ENCODE measurements at regions of chr7 and their contacts with region 1.

Region 1: DNA sequence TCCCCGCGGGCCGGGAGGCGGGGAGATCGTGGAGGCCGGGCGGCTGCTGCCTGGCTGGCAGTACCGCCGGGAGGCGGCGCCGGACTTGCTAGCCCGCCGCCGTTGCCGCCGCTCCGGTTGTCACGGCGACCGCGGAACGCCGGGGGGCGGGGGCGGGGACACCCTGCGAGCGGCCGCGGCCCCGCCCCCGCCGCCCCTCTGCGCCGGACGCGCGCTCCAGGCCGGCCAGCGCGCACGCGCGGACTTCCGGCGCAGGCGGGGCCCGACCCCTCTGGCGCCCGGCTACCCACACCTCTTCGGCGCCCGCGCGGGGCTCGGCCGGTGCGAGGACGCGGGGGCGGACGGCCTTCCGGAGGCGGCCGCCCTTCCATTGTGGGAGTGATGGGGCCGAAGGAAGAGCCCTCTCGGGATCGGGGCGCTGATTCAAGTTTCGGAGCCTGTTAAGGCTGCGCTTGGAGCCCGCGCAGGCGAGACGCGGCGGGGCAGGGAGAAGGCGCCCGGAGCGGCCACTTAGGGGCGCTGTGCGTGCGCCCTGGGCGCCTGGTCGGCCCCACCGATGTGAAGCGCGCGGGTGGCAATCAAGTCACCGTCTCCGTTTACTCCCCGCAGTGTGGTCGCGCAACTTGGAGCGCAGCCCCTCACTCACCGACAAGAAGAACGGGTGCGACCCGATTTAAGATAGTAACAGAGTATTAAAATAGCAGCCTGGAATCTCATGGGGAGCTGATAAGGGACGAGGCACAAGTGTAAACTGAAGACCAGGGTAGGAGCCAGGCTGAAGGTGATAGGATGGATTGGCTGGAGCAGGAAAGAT is 448 bp upstream of the DPY19L1 start:
- DNase-seq: peak; percentile 91 to 96
- ATAC-seq: peak; percentile 85 to 94 (median 90)
- H3K4me3 ChIP-seq: peak overlapping the region; percentile 23 to 86 (median 68)
- H3K27ac ChIP-seq: peak overlapping the region; percentile 70 to 93 (median 89)
- H3K4me1 ChIP-seq: peaks cover 0 to 34% (median 24%) of the 10 kb centered on the region in 9 donors
- H3K27me3 ChIP-seq: no peaks in the 10 kb centered on the region
- CTCF ChIP-seq: peak; percentile 73 to 97 (median 83)

Region 2: DNA sequence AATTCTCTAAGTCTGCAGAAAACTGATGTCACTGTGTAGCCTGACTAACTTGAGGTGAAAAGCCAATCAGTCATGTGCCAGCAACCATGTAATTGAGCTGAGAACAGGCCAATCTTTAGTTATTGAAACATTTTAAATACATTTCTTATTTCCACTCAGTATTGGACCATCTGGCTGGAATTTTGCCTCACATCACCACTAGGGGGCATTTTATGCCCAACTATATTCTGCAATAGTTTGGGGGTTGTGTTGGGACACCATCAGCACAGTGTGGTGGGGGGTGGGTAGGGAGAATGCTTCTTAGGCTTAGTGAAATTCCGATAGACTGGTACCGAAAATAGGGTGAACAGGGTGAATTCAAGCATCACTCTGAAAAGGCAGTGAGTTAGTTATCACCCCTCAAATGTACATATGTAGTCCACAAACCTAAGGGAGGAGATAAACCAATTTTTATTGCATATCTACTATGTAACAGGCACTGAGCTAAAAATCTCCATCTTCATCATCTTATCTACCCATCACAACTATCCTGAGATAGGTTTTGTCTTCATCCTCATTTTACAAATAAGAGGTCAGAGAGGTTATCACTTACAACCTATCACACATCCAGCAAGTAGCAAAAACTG is 361.9 kb before region 1 on chr7:
- intact Hi-C with region 1: loop called in 1 of 10 experiments (anchors 10 kb)
- DNase-seq: no peak
- ATAC-seq: peak in 3 of 8 donors; percentile 41 to 58 (median 56)
- H3K4me3 ChIP-seq: no peak overlapping the region
- H3K27ac ChIP-seq: no peak overlapping the region
- H3K4me1 ChIP-seq: no peaks in the 10 kb centered on the region
- H3K27me3 ChIP-seq: no peaks in the 10 kb centered on the region
- CTCF ChIP-seq: peak; percentile 23 to 61 (median 55)

Region 3: DNA sequence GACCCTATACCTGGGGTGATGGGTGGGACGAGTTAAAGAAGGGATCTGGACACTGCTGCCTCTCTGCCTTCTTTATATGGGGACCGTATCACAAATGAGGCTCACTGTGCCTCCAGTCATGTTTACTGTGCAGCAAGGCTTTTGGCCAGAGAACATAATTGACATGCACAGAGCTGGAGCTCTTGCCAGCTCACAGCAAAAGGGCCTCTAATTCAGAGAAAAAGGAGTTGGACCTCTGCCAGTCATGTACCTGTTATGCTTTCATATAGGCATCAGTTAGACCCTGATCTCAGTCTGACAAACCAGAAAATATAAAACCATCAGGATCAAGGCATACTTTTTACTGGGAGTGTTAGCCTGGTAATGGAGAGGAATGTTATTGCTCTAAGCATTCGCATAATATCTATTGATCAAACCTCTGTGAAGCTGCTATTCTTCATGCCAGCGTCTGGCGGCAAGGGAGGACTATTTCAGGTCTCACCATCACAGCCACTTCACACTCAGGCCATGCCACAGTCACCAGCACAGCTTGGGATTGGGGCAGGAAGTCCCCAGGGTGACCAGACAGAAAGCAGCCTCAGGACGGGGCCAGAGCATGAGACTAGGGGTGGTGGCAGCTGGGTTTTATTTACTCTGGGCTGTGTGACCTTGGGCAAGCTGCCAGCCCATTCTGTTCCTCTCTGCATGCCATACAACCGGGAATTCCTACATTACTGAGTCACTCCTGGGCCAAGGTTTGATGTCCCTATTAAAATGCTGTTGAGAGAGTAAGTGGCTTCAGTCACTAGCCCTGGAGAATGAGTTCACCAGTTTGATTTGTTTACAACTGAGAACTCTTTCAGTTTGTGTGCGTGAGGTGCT is 289.6 kb before region 1 on chr7:
- intact Hi-C with region 1: loop called in 2 of 10 experiments (anchors 2 to 5 kb)
- DNase-seq: peak; percentile 68 to 82
- ATAC-seq: peak; percentile 91 to 99 (median 97)
- H3K4me3 ChIP-seq: no peak overlapping the region
- H3K27ac ChIP-seq: peak overlapping the region in 8 of 10 donors; percentile 31 to 78 (median 66)
- H3K4me1 ChIP-seq: peaks cover 0 to 23% (median 5%) of the 10 kb centered on the region in 9 donors
- H3K27me3 ChIP-seq: no peaks in the 10 kb centered on the region
- CTCF ChIP-seq: no peak

Region 4: GRCh38 chr7:34806831-34807230 is 230.9 kb before region 1 on chr7:
- intact Hi-C with region 1: no loop called
- DNase-seq: no peak
- ATAC-seq: no peak
- H3K4me3 ChIP-seq: no peak overlapping the region
- H3K27ac ChIP-seq: no peak overlapping the region
- H3K4me1 ChIP-seq: no peaks in the 10 kb centered on the region
- H3K27me3 ChIP-seq: peaks cover 0 to 4% (median 0%) of the 10 kb centered on the region in 7 donors
- CTCF ChIP-seq: no peak